ENCODE measurements at regions of chr1 and their contacts with region 1.

Region 1: DNA sequence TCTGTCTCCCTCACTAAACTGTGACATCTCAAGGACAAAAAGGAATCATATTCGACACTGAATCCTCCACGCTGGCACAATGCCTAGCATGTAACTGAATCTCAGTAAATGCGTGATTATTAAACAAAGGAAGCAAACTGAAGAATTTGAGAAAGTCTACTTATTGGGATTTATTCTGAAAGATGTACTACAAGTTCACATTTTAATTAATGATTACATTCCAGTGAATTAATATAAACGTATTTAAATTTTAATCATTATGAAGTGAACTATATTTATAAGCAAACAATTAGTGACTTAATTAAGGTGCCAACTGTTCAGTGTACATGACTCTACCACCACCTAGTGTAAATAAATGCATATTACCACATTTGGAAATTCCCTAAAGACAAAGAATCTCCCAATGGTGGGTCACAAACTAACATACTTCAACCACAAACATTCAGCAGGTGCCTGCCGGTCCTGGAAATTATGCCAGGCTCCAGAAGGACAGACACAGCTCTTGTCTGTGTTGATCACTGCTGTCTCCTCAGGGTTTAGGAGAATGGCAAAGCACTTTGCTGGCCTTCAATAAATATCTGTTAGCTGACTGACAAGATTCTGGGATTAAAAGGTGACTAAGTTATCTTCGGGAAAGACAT is 56.3 kb downstream of the SMYD3 start:
- DNase-seq: peak; percentile 58
- H3K4me3 ChIP-seq: no peak overlapping the region
- H3K27ac ChIP-seq: no peak overlapping the region
- H3K4me1 ChIP-seq: peaks cover 20% of the 10 kb centered on the region
- H3K27me3 ChIP-seq: no peaks in the 10 kb centered on the region

Region 2: GRCh38 chr1:245129319-245130240 is 1321.2 kb before region 1 on chr1:
- in situ Hi-C with region 1: loop called (anchors 25 kb)
- DNase-seq: peak; percentile 24
- H3K4me3 ChIP-seq: no peak overlapping the region
- H3K27ac ChIP-seq: no peak overlapping the region
- H3K4me1 ChIP-seq: no peaks in the 10 kb centered on the region
- H3K27me3 ChIP-seq: 0 out of 2 replicates have a peak, but pooled peaks cover 3% of the 10 kb centered on the region

Region 3: DNA sequence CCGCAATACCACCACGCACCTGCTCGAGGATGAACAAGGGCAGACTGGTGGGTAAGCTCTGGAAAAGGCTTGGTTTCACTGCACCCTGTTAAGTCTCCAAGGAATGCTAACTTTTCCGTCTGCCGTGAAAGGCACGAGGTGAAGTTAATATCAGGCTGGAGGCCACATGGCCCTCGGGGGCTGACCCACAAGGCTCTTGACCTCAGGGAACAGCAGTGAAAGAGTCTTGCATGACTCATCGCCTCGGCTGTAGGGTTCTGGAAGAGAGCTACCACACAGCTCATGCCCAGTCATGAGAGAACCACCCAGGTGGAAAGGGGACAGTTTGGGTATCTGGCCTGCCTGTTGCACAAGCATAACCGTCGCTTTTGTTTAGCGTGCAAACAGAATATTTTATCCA is 298.1 kb after region 1 on chr1:
- in situ Hi-C with region 1: no loop called
- DNase-seq: peak; percentile 18
- H3K4me3 ChIP-seq: no peak overlapping the region
- H3K27ac ChIP-seq: no peak overlapping the region
- H3K4me1 ChIP-seq: no peaks in the 10 kb centered on the region
- H3K27me3 ChIP-seq: no peaks in the 10 kb centered on the region

Region 4: GRCh38 chr1:246907472-246907871 is 456.7 kb after region 1 on chr1:
- in situ Hi-C with region 1: no loop called
- DNase-seq: peak; percentile 71
- H3K4me3 ChIP-seq: no peak overlapping the region
- H3K27ac ChIP-seq: no peak overlapping the region
- H3K4me1 ChIP-seq: no peaks in the 10 kb centered on the region
- H3K27me3 ChIP-seq: no peaks in the 10 kb centered on the region

Measured in GM23248 (cell line).